CD4-positive, alpha-beta T cell (primary cell): ENCODE measurements at regions of chr20 and their contacts with region 1.

Region 1: DNA sequence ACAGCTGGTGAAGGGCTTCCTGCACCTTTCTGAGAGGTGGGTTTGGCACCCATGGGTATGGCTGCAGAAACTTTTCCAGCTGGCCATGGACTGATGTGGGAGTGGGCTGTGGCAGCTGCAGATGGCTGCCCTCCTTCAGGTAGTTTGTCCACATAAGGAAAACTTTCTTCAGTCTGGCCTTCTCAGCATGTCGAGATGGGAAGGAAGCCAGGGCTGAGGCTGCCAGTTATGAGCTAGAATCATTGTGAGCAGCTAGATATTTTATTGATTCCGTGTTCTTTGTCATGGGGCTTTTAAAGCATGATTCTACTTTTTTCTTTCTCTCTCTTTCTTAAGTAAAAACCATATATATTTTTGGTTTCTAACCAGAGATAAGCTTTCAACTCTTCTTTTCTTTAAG is 16.6 kb downstream of the NKX2-4 start:
- DNase-seq: no peak
- ATAC-seq: no peak
- H3K4me3 ChIP-seq: no peak overlapping the region
- H3K4me3 Mint-ChIP-seq: no peak overlapping the region
- H3K27ac ChIP-seq: no peak overlapping the region
- H3K27ac Mint-ChIP-seq: no peak overlapping the region
- H3K4me1 ChIP-seq: no peaks in the 10 kb centered on the region
- H3K4me1 Mint-ChIP-seq: no peaks in the 10 kb centered on the region
- H3K27me3 ChIP-seq: no peaks in the 10 kb centered on the region
- H3K27me3 Mint-ChIP-seq: no peaks in the 10 kb centered on the region
- CTCF ChIP-seq: no peak

Region 2: DNA sequence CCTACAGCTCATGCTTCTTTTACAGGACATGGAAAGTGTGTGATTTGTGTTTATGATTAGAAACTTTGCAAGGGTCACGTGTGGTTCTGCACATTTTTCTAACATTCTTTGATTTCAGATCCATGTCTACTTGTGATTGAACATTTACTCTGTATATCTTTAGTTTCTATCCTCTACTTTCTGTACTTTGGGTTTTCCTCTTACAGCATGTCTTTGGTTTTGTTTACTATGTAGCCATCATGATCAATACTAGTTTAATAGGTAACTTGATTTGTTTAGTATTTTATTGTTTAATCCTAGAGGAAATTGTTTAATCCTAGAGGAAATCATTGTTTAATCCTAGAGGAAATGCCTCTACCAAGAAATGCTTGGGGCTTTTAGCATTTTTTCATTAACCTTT is 35.8 kb before region 1 on chr20:
- CTCF ChIA-PET with region 1: no interaction called
- POLR2A ChIA-PET with region 1: no interaction called
- intact Hi-C with region 1: loop called in 1 of 2 experiments (anchors 5 kb)
- DNase-seq: no peak
- ATAC-seq: no peak
- H3K4me3 ChIP-seq: no peak overlapping the region
- H3K4me3 Mint-ChIP-seq: no peak overlapping the region
- H3K27ac ChIP-seq: no peak overlapping the region
- H3K27ac Mint-ChIP-seq: no peak overlapping the region
- H3K4me1 ChIP-seq: no peaks in the 10 kb centered on the region
- H3K4me1 Mint-ChIP-seq: peaks cover 4% of the 10 kb centered on the region
- H3K27me3 ChIP-seq: no peaks in the 10 kb centered on the region
- H3K27me3 Mint-ChIP-seq: no peaks in the 10 kb centered on the region
- CTCF ChIP-seq: no peak